CD4-positive, alpha-beta memory T cell (primary cell): ENCODE measurements at regions of chr20 and their contacts with region 1.

Region 1: DNA sequence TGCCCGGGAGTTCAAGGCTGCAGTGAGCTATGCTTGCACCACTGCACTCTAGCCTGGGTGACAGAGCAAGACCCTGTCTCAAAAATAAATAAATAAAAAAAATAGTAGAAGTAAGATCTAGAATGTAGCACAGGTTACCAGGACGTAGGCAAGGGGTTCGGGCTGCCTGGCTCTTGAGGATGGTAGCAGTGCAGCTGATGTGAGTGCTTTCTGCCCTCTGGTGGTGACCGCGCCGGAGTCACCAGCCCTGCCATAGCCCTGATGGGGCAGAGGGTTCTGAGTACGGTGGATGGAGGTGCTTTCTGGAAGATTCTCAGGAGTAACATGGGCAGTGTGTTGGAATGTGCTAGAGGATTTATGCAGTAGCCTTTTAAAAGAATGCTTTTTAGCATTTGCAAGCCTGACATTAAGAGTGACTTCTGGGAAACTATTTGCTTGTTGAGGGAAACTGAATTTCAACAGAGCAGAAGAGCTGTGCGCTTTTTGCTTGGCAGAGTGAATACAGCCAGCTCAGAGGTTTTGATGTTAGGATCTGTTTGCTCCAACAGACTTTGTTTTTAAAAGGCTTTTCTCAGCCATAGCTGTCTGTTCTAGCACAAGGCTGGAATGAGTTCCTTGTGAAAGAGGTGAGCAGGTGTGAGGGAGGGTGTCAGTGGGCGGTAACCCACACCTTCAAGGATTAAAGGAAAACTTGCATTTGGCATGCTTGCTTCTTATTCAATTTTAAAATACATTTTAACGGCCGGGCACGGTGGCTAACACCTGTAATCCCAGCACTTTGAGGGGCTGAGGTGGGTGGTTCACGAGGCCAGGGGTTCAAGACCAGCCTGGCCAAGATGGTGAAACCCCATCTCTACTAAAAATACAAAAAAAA is 65.9 kb downstream of the PTPN1 start:
- DNase-seq: peak; percentile 48 to 59 (median 57)
- H3K4me3 ChIP-seq: no peak overlapping the region
- H3K4me3 Mint-ChIP-seq: no peak overlapping the region
- H3K27ac ChIP-seq: no peak overlapping the region
- H3K27ac Mint-ChIP-seq: peak overlapping the region in 4 of 7 donors; percentile 47 to 88 (median 82)
- H3K4me1 ChIP-seq: peaks cover 10% of the 10 kb centered on the region
- H3K4me1 Mint-ChIP-seq: peaks cover 12 to 45% (median 29%) of the 10 kb centered on the region in 4 donors
- H3K27me3 ChIP-seq: no peaks in the 10 kb centered on the region
- H3K27me3 Mint-ChIP-seq: no peaks in the 10 kb centered on the region

Region 2: DNA sequence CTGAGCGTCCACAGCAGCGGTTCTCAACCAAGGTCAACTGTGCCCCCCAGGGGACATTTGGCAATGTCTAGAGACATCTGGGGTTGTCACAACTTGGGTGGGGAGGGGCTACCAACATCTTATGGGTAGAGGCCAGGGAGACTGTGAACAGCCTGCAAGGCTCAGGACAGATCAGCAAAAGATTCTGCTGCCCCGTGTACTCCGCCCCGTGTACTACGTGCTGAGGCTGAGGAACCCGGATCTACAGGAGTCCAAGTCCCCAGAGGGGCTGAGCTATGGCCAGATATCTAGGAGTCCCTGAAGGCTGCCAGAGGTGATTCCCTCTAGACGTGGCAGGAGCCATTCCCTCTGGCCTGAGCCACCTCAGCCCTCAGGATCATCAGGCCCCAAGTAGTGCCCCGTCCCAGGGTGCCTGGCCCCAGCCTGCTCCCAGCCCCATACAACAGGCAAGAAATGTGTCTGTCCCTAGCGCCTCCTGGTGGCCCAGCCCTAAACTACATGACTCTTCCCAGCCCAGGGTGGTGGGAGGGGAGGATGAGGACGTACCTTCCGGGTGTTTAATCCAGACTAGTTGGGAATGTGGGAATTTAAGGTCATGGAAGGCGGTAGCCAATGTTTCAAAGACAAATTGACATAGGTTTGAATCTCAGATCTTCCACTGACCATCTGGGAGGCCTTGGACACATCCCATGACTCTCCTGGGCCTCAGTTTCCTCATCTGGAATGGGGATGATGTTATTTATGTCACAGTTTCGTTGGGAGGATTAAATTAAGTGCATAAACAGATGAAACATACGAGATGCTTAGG is 115.4 kb before region 1 on chr20:
- CTCF ChIA-PET with region 1: interaction called, 13 read pairs
- POLR2A ChIA-PET with region 1: no interaction called
- intact Hi-C with region 1: no loop called
- DNase-seq: peak; percentile 70 to 80 (median 76)
- H3K4me3 ChIP-seq: no peak overlapping the region
- H3K4me3 Mint-ChIP-seq: no peak overlapping the region
- H3K27ac ChIP-seq: no peak overlapping the region
- H3K27ac Mint-ChIP-seq: peak overlapping the region in 2 of 7 donors; percentile 15 to 37
- H3K4me1 ChIP-seq: peaks cover 8% of the 10 kb centered on the region
- H3K4me1 Mint-ChIP-seq: peaks cover 0 to 5% (median 4%) of the 10 kb centered on the region in 4 donors
- H3K27me3 ChIP-seq: no peaks in the 10 kb centered on the region
- H3K27me3 Mint-ChIP-seq: peaks cover 2 to 10% of the 10 kb centered on the region in 2 donors

Region 3: DNA sequence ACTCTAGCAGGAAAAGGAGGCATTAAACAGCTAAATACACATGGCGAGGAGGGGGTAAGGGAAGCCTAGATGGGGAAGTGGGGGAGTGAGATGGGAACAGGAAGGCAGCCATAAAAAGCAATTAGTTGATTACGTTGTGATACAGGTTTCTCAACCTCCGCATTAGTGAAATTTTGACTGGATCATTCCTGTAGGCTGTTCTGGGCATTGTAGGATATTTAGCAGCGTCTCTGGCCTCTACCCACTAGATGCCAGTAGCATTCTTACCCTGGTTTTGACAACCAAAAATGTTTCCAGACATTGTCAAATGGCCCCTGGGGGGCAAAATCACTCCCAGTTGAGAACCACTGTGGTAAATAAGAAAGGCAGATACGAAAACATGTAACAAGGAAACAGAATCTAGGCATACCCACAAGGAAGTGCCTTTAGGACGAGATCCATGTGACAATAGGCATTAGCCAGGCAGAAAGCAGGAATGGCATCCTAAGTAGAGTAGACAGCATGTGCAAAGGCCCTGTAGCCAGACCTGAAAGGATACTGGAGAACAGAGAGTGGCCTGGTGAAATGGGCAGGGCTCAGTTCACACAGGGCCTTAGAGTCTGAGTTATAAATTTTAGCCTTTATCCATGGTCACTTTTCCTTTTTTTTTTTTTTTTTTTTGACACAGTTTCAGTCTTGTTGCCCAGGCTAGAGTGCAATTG is 91.7 kb before region 1 on chr20:
- CTCF ChIA-PET with region 1: interaction called, 106 read pairs
- POLR2A ChIA-PET with region 1: no interaction called
- intact Hi-C with region 1: no loop called
- DNase-seq: no peak
- H3K4me3 ChIP-seq: peak overlapping the region in 1 of 2 donors; percentile 68
- H3K4me3 Mint-ChIP-seq: peak overlapping the region; percentile 13 to 98 (median 96)
- H3K27ac ChIP-seq: peak overlapping the region; percentile 81
- H3K27ac Mint-ChIP-seq: peak overlapping the region; percentile 85 to 100 (median 97)
- H3K4me1 ChIP-seq: peaks cover 18% of the 10 kb centered on the region
- H3K4me1 Mint-ChIP-seq: peaks cover 16 to 26% (median 24%) of the 10 kb centered on the region in 4 donors
- H3K27me3 ChIP-seq: no peaks in the 10 kb centered on the region
- H3K27me3 Mint-ChIP-seq: peaks cover 0 to 4% of the 10 kb centered on the region in 2 donors

Region 4: DNA sequence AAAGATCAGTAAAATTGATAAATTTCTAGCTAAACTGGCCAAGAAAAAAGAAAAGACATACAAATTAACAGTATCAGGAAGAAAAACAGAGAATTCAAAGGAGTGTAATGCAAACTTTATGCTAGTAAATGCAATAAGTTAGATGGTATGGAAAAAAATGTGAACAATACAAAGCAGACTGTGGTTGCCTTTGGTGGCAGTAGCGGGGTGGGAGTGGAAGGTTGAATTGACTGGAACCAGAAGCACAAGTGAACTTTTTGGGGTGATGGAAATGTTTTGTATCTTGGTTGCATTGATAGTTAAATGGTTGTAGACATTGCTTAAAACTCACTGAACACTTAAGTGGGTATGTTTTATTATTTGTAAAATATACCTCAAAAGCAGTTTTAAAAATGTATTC is 20.9 kb before region 1 on chr20:
- CTCF ChIA-PET with region 1: interaction called, 11 read pairs
- POLR2A ChIA-PET with region 1: no interaction called
- intact Hi-C with region 1: no loop called
- DNase-seq: no peak
- H3K4me3 ChIP-seq: no peak overlapping the region
- H3K4me3 Mint-ChIP-seq: no peak overlapping the region
- H3K27ac ChIP-seq: no peak overlapping the region
- H3K27ac Mint-ChIP-seq: no peak overlapping the region
- H3K4me1 ChIP-seq: peaks cover 69% of the 10 kb centered on the region
- H3K4me1 Mint-ChIP-seq: peaks cover 23 to 41% (median 40%) of the 10 kb centered on the region in 4 donors
- H3K27me3 ChIP-seq: no peaks in the 10 kb centered on the region
- H3K27me3 Mint-ChIP-seq: no peaks in the 10 kb centered on the region

Region 5: DNA sequence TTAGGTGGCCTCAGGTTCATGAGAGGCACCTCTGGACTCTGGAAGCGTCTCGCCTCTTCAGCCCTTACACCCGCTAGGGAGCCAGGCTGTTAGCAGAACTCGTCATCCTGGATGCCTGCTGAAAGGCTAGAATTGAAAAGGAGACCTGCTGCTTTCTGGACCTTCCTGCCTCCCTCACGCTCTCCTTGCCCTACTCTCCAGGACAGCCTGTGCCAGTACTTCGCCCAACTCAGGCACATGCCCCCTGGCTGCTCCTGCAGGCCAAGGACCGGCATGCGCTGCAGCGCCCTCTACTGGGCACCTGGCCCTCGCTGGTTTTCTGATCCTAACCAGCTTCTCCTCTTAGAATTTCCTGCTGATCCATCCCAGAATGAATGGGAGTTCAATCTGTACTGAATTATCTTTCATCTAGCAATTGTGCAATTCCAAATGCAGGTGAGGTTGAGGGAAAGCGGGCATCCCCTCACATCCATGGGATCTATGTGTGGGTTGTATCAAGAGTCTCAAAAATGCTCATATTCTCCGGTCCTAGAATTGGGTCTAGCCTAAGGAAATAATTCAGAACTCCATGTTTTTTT is 12.0 kb after region 1 on chr20:
- CTCF ChIA-PET with region 1: interaction called, 18 read pairs
- POLR2A ChIA-PET with region 1: no interaction called
- intact Hi-C with region 1: no loop called
- DNase-seq: peak; percentile 59 to 70 (median 65)
- H3K4me3 ChIP-seq: no peak overlapping the region
- H3K4me3 Mint-ChIP-seq: no peak overlapping the region
- H3K27ac ChIP-seq: no peak overlapping the region
- H3K27ac Mint-ChIP-seq: peak overlapping the region in 4 of 7 donors; percentile 40 to 83 (median 62)
- H3K4me1 ChIP-seq: no peaks in the 10 kb centered on the region
- H3K4me1 Mint-ChIP-seq: peaks cover 1 to 15% (median 4%) of the 10 kb centered on the region in 4 donors
- H3K27me3 ChIP-seq: no peaks in the 10 kb centered on the region
- H3K27me3 Mint-ChIP-seq: no peaks in the 10 kb centered on the region